Heart right ventricle (tissue), 16 donors: ENCODE measurements at regions of chr5 and their contacts with region 1.

Region 1: GRCh38 chr5:113204525-113205161 is 228.0 kb downstream of the DCP2 start:
- DNase-seq: peak; percentile 38 to 45
- ATAC-seq: peak in 6 of 8 donors; percentile 12 to 61 (median 42)
- H3K4me3 ChIP-seq: no peak overlapping the region
- H3K27ac ChIP-seq: peak overlapping the region in 6 of 10 donors; percentile 3 to 76 (median 43)
- H3K4me1 ChIP-seq: peaks cover 2 to 93% (median 73%) of the 10 kb centered on the region in 9 donors
- H3K27me3 ChIP-seq: no peaks in the 10 kb centered on the region
- CTCF ChIP-seq: no peak

Region 2: DNA sequence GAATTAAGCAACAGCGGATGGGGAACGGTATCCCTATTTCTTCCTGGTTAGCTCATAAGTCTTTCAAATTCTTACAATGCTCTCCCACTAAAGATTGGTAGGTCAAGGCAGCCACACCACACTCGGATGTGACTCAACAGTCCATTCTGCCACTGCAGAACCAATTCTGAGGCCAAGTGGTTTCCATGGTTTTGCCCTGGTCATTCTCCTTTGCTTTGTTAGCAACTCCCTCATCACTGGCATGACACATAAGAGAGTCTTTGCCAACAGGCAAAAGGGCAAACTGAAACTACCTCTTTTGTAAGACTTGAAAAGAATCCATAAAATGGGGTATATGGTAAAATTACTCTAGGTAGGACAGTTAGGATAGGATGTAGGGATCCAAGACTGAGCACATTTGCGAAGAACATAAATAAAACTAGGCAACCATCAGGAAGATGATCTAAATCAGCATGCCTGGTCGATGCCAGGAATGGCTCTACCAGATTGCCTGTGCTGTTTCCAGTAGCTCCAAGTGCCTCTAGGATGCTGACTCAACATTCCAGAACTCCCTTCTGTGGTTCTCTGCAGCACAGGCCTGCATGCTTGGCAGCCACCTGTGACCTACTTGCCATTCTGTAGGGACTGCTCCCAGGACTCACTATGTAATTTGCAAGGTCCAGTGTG is 122.6 kb before region 1 on chr5:
- intact Hi-C with region 1: loop called in 4 of 10 experiments (anchors 5 to 10 kb)
- DNase-seq: no peak
- ATAC-seq: peak in 1 of 8 donors; percentile 55
- H3K4me3 ChIP-seq: no peak overlapping the region
- H3K27ac ChIP-seq: no peak overlapping the region
- H3K4me1 ChIP-seq: peaks cover 0 to 49% (median 28%) of the 10 kb centered on the region in 9 donors
- H3K27me3 ChIP-seq: no peaks in the 10 kb centered on the region
- CTCF ChIP-seq: no peak

Region 3: DNA sequence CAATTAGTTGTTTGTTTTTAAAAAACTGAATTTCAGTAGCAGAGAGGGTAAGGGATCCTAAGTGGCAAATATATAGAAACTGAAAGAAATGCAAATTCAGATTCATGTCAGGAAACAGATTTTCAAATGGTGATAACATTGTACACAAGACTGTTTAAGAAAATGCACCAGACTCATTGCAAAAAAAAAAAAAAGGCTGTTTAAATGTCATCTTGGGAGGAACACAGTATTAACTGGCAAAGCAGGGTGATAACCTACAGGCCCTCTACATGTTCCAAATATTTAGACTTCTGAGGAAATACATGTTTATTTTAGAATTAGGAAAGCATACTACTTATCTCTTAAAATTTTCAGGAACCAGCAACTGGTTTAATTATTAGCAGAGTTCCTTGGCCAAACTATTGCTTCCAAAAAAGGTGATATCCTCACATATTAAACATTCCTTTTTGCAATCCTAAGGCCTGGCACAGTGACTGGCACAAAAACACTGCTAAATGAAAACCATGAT is 115.7 kb after region 1 on chr5:
- intact Hi-C with region 1: loop called in 1 of 10 experiments (anchors 10 kb)
- DNase-seq: no peak
- ATAC-seq: no peak
- H3K4me3 ChIP-seq: no peak overlapping the region
- H3K27ac ChIP-seq: peak overlapping the region in 1 of 10 donors; percentile 34
- H3K4me1 ChIP-seq: peaks cover 0 to 22% (median 13%) of the 10 kb centered on the region in 9 donors
- H3K27me3 ChIP-seq: no peaks in the 10 kb centered on the region
- CTCF ChIP-seq: no peak

Region 4: DNA sequence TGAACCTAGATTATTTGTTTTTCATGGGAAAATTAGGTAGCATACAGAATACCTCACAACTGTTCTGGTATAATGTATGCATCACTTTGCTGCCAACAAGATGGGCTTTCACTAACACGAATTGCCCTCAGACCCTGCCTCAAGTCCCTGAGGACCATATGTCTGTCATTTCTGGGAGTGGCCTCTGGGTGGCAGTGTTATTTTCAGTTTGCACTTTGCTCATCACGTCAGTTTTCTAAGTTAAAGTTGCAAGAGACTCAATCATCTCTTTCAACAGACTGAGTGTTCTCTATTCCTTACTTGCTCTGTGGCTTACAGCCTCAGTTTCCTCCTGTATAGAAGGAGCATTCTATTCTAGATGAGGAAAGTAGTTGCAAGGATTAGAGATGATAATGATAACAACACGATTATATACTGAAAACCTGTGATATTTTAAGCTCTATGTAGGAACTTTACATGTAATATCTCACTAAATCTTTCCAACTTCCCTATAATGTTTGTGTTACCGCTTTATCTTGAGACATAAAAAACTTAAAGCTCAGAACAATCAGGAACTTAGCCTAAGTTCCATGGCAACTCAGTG is 174.4 kb after region 1 on chr5:
- intact Hi-C with region 1: no loop called
- DNase-seq: peak in 1 of 2 donors; percentile 57
- ATAC-seq: peak in 3 of 8 donors; percentile 46 to 71 (median 52)
- H3K4me3 ChIP-seq: no peak overlapping the region
- H3K27ac ChIP-seq: no peak overlapping the region
- H3K4me1 ChIP-seq: peaks cover 0 to 30% (median 0%) of the 10 kb centered on the region in 9 donors
- H3K27me3 ChIP-seq: peaks cover 0 to 29% (median 0%) of the 10 kb centered on the region in 7 donors
- CTCF ChIP-seq: peak; percentile 45 to 84 (median 76)